ENCODE measurements at regions of chr13 and their contacts with region 1.

Region 1: DNA sequence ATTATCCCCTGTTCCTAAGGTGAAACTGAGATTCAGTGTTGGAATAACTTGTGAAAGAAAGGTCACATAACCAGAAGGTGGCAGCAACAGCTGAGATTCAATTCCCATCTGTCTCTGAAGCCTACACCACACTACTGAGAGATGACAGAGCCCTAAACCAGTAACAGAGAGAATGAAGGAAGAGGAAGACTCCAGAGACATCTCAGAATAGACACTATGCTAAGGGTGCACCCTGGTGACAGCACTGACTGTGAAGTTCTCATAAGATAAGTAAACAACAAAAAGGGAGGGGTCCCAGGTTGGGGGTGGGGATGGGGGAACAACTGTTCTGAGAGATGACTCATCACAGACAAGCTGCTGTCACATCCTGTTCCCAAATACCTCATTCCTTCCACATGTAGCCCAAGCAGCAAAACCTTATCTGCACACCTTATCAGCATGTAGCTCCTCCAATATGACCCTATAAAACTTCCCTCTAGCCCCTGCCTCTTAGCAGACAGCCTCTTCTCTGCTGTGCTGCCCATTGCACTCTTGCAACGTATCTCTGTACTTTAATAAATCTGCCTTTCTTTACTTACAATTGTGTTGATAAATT is 46.5 kb downstream of the UTP14C start:
- DNase-seq: peak in 3 of 9 experiments; percentile 7 to 25 (median 20)
- ATAC-seq: peak; percentile 59
- H3K4me3 ChIP-seq: no peak overlapping the region
- H3K4me3 Mint-ChIP-seq: no peak overlapping the region
- H3K27ac ChIP-seq: no peak overlapping the region
- H3K27ac Mint-ChIP-seq: no peak overlapping the region
- H3K4me1 ChIP-seq: no peaks in the 10 kb centered on the region
- H3K4me1 Mint-ChIP-seq: peaks cover 2% of the 10 kb centered on the region
- H3K27me3 ChIP-seq: no peaks in the 10 kb centered on the region
- H3K27me3 Mint-ChIP-seq: peaks cover 22% of the 10 kb centered on the region
- CTCF ChIP-seq: no peak

Region 2: DNA sequence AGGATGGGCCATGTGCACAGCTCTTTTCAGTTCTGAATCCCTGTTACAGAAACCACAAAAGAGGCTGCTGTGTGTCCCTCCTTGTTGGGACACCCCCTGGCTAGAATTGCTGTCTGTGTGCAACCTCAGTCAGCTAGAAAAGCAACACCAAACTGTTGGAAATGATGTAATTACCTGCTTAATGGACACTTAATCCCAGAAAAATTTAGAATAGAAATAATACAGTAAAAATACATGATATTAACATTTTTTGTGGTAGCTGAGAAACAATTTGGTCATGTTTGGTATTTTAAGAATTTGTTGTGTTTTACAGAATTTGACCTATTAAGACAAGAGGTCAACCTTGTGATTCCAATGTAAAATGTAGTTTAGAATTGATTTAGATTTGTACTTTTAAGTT is 802.0 kb before region 1 on chr13:
- CTCF ChIA-PET with region 1: no interaction called
- POLR2A ChIA-PET with region 1: no interaction called
- intact Hi-C with region 1: loop called in 1 of 2 experiments (anchors 10 kb)
- DNase-seq: no peak
- ATAC-seq: no peak
- H3K4me3 ChIP-seq: no peak overlapping the region
- H3K4me3 Mint-ChIP-seq: no peak overlapping the region
- H3K27ac ChIP-seq: no peak overlapping the region
- H3K27ac Mint-ChIP-seq: no peak overlapping the region
- H3K4me1 ChIP-seq: no peaks in the 10 kb centered on the region
- H3K4me1 Mint-ChIP-seq: no peaks in the 10 kb centered on the region
- H3K27me3 ChIP-seq: no peaks in the 10 kb centered on the region
- H3K27me3 Mint-ChIP-seq: no peaks in the 10 kb centered on the region
- CTCF ChIP-seq: no peak

Region 3: DNA sequence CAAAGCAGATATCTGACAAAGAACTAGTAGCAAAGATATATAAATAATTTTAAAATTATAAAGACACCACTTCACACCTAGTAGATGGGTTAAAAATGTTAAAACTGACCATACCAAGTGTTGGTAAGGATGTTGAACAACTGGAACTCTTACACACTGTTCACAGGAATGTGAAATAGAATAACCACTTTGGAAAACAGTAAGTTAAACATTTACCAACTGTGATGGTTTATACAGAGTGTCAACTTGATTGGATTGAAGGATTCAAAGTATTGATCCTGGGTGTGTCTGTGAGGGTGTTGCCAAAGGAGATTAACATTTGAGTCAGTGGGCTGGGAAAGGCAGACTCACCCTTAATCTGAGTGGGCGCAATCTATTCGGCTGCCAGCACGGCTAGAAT is 27.4 kb before region 1 on chr13:
- CTCF ChIA-PET with region 1: no interaction called
- POLR2A ChIA-PET with region 1: no interaction called
- intact Hi-C with region 1: no loop called
- DNase-seq: no peak
- ATAC-seq: no peak
- H3K4me3 ChIP-seq: no peak overlapping the region
- H3K4me3 Mint-ChIP-seq: no peak overlapping the region
- H3K27ac ChIP-seq: no peak overlapping the region
- H3K27ac Mint-ChIP-seq: no peak overlapping the region
- H3K4me1 ChIP-seq: no peaks in the 10 kb centered on the region
- H3K4me1 Mint-ChIP-seq: no peaks in the 10 kb centered on the region
- H3K27me3 ChIP-seq: no peaks in the 10 kb centered on the region
- H3K27me3 Mint-ChIP-seq: no peaks in the 10 kb centered on the region
- CTCF ChIP-seq: no peak

Measured in CD8-positive, alpha-beta T cell (primary cell).